Psoas muscle (tissue), 8 donors: ENCODE measurements at regions of chr6 and their contacts with region 1.

Region 1: GRCh38 chr6:5143634-5144311 is 58.6 kb downstream of the PPP1R3G start:
- DNase-seq: peak; percentile 83 to 93
- ATAC-seq: peak; percentile 81 to 95 (median 91)
- H3K4me3 ChIP-seq: no peak overlapping the region
- H3K27ac ChIP-seq: peak overlapping the region; percentile 55
- H3K4me1 ChIP-seq: peaks cover 6% of the 10 kb centered on the region
- H3K27me3 ChIP-seq: no peaks in the 10 kb centered on the region
- CTCF ChIP-seq: peak; percentile 96

Region 2: DNA sequence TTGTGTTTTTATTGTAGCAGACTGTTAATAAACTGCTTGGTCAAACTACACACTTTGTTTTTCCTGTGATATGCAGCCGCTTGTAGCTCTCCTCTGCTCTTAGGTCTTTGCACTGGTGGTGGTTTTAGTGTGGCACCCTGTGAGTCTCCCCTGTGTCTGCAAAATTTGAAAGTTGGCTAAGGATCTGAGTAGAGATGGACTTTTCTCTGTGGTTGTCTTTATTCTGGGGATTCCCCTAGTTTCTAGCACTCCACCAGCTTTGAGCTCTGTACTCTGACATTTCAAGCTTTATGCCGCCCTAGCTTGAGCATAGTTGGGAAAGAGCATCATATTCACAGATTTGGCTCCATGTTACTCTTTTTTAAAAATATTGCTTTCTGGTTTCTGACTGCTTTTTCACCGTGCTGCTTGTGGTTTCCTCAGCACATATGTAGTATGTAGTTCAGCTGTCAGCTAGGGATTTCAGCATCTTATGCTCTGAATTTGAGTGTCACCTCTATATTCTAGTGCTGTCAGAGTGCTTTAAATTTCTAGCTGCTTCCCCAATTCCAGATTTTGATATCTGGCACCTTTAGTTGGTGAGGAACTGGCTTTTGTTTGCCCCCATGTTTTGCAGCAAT is 342.2 kb before region 1 on chr6:
- intact Hi-C with region 1: no loop called
- DNase-seq: no peak
- ATAC-seq: no peak
- H3K4me3 ChIP-seq: no peak overlapping the region
- H3K27ac ChIP-seq: no peak overlapping the region
- H3K4me1 ChIP-seq: peaks cover 35% of the 10 kb centered on the region
- H3K27me3 ChIP-seq: no peaks in the 10 kb centered on the region
- CTCF ChIP-seq: no peak

Region 3: DNA sequence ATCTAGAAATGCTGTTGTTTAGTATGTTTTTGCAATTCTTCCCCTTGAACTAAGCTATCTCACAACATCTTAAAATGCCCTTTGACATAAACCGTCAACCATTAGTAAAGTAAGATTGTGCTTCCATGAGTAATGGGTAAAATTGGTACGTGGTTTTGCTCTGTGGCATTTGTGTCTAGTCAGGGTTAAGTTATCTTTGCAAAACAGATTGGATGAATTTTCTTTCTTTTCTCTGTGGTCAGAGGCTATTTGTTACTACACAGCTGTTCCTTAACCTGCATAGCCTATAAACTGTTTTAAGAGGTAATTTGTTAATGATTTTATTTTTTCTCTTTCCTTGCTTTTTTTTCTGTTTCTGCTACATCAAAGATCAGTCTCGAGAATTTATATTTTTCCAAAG is 215.3 kb before region 1 on chr6:
- intact Hi-C with region 1: no loop called
- DNase-seq: no peak
- ATAC-seq: no peak
- H3K4me3 ChIP-seq: no peak overlapping the region
- H3K27ac ChIP-seq: no peak overlapping the region
- H3K4me1 ChIP-seq: peaks cover 39% of the 10 kb centered on the region
- H3K27me3 ChIP-seq: no peaks in the 10 kb centered on the region
- CTCF ChIP-seq: no peak

Region 4: GRCh38 chr6:5203546-5203945 is 59.8 kb after region 1 on chr6:
- intact Hi-C with region 1: loop called in 1 of 2 experiments (anchors 5 kb)
- DNase-seq: no peak
- ATAC-seq: no peak
- H3K4me3 ChIP-seq: no peak overlapping the region
- H3K27ac ChIP-seq: no peak overlapping the region
- H3K4me1 ChIP-seq: peaks cover 29% of the 10 kb centered on the region
- H3K27me3 ChIP-seq: no peaks in the 10 kb centered on the region
- CTCF ChIP-seq: no peak

Region 5: GRCh38 chr6:5260661-5261544 is 117.1 kb after region 1 on chr6 and contains the starts of genes FARS2 and LYRM4:
- intact Hi-C with region 1: loop called in 1 of 2 experiments (anchors 5 kb)
- DNase-seq: peak; percentile 92 to 96
- ATAC-seq: peak; percentile 97 to 98 (median 98)
- H3K4me3 ChIP-seq: peak within 1 kb of the TSS; percentile 85
- H3K27ac ChIP-seq: peak within 1 kb of the TSS; percentile 99
- H3K4me1 ChIP-seq: peaks cover 19% of the 10 kb centered on the region
- H3K27me3 ChIP-seq: no peaks in the 10 kb centered on the region
- CTCF ChIP-seq: no peak
- total RNA-seq, gene FARS2: 10.6 to 17.5 (median 15.8) TPM
- total RNA-seq, gene LYRM4: 11.3 to 21.1 (median 16.2) TPM

Region 6: GRCh38 chr6:5302995-5303622 is 159.3 kb after region 1 on chr6:
- intact Hi-C with region 1: loop called (anchors 1 to 10 kb)
- DNase-seq: peak; percentile 28 to 61
- ATAC-seq: peak; percentile 90 to 95 (median 92)
- H3K4me3 ChIP-seq: peak overlapping the region; percentile 37
- H3K27ac ChIP-seq: peak overlapping the region; percentile 21
- H3K4me1 ChIP-seq: peaks cover 31% of the 10 kb centered on the region
- H3K27me3 ChIP-seq: no peaks in the 10 kb centered on the region
- CTCF ChIP-seq: peak; percentile 64

Region 7: DNA sequence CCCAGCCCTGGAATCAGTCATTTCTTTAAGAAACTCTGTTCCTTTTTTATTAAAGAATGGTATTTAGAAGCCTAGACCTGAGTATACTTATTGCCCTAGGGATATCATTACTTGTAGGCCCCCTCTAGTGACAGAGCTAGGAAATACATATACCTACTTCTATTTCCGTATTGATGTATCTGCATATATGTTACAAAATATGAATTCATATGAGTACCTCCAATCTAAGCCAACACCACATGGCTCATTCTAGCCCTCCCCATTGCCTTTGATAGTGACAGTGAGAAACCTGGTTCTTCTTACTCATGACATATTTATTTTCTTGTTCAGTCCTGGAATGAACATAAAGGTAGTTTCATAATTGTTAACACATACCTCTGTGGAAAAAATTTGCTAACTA is 254.8 kb after region 1 on chr6:
- intact Hi-C with region 1: loop called (anchors 2 kb)
- DNase-seq: no peak
- ATAC-seq: peak in 2 of 4 donors; percentile 40 to 61
- H3K4me3 ChIP-seq: no peak overlapping the region
- H3K27ac ChIP-seq: no peak overlapping the region
- H3K4me1 ChIP-seq: no peaks in the 10 kb centered on the region
- H3K27me3 ChIP-seq: no peaks in the 10 kb centered on the region
- CTCF ChIP-seq: peak; percentile 43

Region 8: GRCh38 chr6:6547110-6547879 is 1403.5 kb after region 1 on chr6:
- intact Hi-C with region 1: loop called in 1 of 2 experiments (anchors 10 kb)
- DNase-seq: peak; percentile 85 to 90
- ATAC-seq: peak; percentile 93 to 98 (median 96)
- H3K4me3 ChIP-seq: peak overlapping the region; percentile 64
- H3K27ac ChIP-seq: peak overlapping the region; percentile 6
- H3K4me1 ChIP-seq: peaks cover 7% of the 10 kb centered on the region
- H3K27me3 ChIP-seq: peaks cover 2 to 42% (median 3%) of the 10 kb centered on the region in 3 donors
- CTCF ChIP-seq: peak; percentile 92